Aorta (tissue), 5 donors: ENCODE measurements at regions of chr3 and their contacts with region 1.

Region 1: GRCh38 chr3:107927361-107928083 is 163.3 kb downstream of the CD47 start:
- DNase-seq: peak; percentile 74 to 90
- ATAC-seq: peak; percentile 95
- H3K4me3 ChIP-seq: peak overlapping the region; percentile 30 to 54
- H3K27ac ChIP-seq: no peak overlapping the region
- H3K4me1 ChIP-seq: no peaks in the 10 kb centered on the region
- H3K27me3 ChIP-seq: no peaks in the 10 kb centered on the region

Region 2: DNA sequence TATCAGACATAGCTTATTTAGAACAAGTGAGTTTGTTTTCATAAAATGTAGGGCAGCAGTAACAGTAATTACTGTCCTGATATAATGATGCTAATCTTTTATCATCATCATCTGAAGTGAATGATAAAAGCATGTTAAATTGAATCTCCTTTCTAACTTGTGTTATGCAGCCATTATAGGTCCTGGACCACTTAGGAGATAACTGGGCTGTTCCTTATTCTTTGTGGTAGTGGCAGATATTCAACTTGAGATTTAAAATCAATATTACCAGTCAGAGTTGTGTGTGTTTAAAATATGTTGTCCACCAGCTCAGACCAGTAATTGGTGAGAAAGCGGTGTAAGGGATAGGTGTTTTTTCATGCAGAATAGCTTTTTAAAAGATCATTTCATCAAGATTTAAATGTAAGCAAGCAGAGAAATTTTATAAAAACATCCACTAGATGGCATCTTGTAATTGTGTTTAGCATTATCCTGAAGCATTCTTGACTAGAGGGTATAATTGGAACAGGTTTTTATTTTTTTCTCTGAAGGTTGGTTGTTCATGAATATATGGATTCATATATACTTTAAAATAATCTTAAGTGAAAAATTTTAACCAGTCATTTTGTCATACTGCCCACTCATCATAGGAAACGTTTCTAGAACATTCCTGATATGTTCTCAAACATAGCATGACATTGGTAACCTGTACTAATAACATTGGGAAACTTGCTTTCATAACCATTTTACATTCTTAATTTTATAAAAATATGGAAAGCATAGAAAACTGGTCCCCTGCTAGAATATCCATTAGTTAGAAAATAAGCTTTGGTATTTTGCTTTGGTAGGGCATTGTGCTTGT is 250.8 kb before region 1 on chr3:
- intact Hi-C with region 1: loop called in 1 of 2 experiments (anchors 5 kb)
- DNase-seq: no peak
- ATAC-seq: no peak
- H3K4me3 ChIP-seq: no peak overlapping the region
- H3K27ac ChIP-seq: no peak overlapping the region
- H3K4me1 ChIP-seq: peaks cover 7% of the 10 kb centered on the region in 2 donors
- H3K27me3 ChIP-seq: no peaks in the 10 kb centered on the region

Region 3: GRCh38 chr3:107740992-107741896 is 186.3 kb before region 1 on chr3:
- intact Hi-C with region 1: no loop called
- DNase-seq: no peak
- ATAC-seq: peak; percentile 41
- H3K4me3 ChIP-seq: no peak overlapping the region
- H3K27ac ChIP-seq: no peak overlapping the region
- H3K4me1 ChIP-seq: no peaks in the 10 kb centered on the region
- H3K27me3 ChIP-seq: no peaks in the 10 kb centered on the region

Region 4: GRCh38 chr3:107753480-107753879 is 174.0 kb before region 1 on chr3:
- intact Hi-C with region 1: loop called in 1 of 2 experiments (anchors 5 kb)
- DNase-seq: no peak
- ATAC-seq: peak; percentile 78
- H3K4me3 ChIP-seq: no peak overlapping the region
- H3K27ac ChIP-seq: no peak overlapping the region
- H3K4me1 ChIP-seq: no peaks in the 10 kb centered on the region
- H3K27me3 ChIP-seq: no peaks in the 10 kb centered on the region

Region 5: GRCh38 chr3:107810171-107811071 is 117.1 kb before region 1 on chr3:
- intact Hi-C with region 1: loop called in 1 of 2 experiments (anchors 10 kb)
- DNase-seq: no peak
- ATAC-seq: no peak
- H3K4me3 ChIP-seq: no peak overlapping the region
- H3K27ac ChIP-seq: no peak overlapping the region
- H3K4me1 ChIP-seq: no peaks in the 10 kb centered on the region
- H3K27me3 ChIP-seq: no peaks in the 10 kb centered on the region

Region 6: DNA sequence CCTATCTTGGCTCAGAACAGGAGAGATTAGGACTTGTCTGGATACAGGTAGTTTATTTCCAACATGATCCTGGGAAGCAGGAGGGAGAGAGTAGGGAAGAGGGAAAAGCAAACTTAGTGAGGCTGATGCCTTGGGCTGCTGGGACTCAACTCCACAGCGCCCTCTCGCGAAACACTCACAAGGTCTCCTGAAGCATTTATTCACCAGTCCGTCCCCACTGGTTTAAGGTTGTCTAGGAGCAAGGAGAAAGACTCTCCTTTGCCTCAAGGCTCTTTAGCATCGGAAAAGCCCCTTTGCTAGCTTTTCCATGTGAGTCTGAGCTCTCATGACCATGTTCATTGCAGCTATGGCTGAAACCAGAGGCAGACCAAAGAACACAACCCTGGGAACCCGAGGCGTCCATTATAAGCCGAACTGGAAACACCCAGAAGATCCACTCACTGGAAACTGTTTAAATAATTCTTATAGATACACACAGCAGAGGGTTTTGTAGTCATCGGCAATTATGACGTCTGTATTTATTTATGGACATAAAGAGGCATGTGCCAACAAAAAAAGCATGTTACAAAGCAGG is 81.2 kb before region 1 on chr3:
- intact Hi-C with region 1: loop called (anchors 5 kb)
- DNase-seq: peak; percentile 78 to 91
- ATAC-seq: peak; percentile 83
- H3K4me3 ChIP-seq: no peak overlapping the region
- H3K27ac ChIP-seq: no peak overlapping the region
- H3K4me1 ChIP-seq: peaks cover 0 to 4% of the 10 kb centered on the region in 2 donors
- H3K27me3 ChIP-seq: no peaks in the 10 kb centered on the region